ENCODE measurements at regions of chr9 and their contacts with region 1.

Region 1: GRCh38 chr9:108775901-108776306 is 79.9 kb downstream of the ACTL7B start:
- DNase-seq: no peak
- H3K4me3 ChIP-seq: no peak overlapping the region
- H3K27me3 ChIP-seq: peaks cover 6% of the 10 kb centered on the region
- CTCF ChIP-seq: no peak

Region 2: GRCh38 chr9:109512170-109512756 is 736.4 kb after region 1 on chr9:
- CTCF ChIA-PET with region 1: no interaction called
- POLR2A ChIA-PET with region 1: interaction called, 16 read pairs
- DNase-seq: no peak
- H3K4me3 ChIP-seq: no peak overlapping the region
- H3K27me3 ChIP-seq: peaks cover 10% of the 10 kb centered on the region
- CTCF ChIP-seq: no peak